KBM-7 (cell line): ENCODE measurements at regions of chr1 and their contacts with region 1.

Region 1: GRCh38 chr1:64826991-64827390 is 82.1 kb downstream of the RAVER2 start:
- DNase-seq: no peak

Region 2: GRCh38 chr1:64268653-64269557 is 558.1 kb before region 1 on chr1:
- in situ Hi-C with region 1: loop called (anchors 25 kb)
- DNase-seq: peak; percentile 47

Region 3: GRCh38 chr1:64766385-64766784 is 60.6 kb before region 1 on chr1:
- in situ Hi-C with region 1: no loop called
- DNase-seq: no peak